ENCODE measurements at regions of chr2 and their contacts with region 1.

Region 1: GRCh38 chr2:165203689-165204559 is at the start of gene SCN3A:
- DNase-seq: no peak
- H3K4me3 ChIP-seq: no peak within 1 kb of the TSS
- CTCF ChIP-seq: peak; percentile 65

Region 2: DNA sequence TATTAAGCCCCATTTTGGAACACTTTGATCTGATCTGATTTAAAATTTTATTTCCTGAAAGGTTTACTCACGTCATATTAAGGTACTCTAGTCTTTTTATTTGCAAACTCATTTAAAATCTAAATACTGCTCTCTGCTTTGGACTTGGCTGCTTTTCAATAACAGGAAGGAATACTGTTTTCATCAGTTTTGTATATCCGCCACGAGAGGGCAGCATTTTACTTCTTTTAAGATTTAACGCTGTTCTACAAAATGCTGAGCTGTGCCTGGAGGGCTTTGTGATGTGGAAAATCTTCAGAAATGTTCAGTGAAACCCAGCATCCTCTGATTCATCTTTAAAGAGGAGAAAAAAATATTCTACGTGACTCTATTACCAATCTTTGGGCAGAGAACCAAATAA is 211.1 kb before region 1 on chr2:
- CTCF ChIA-PET with region 1: interaction called, 77 read pairs
- POLR2A ChIA-PET with region 1: no interaction called
- DNase-seq: peak; percentile 75
- H3K4me3 ChIP-seq: no peak overlapping the region
- CTCF ChIP-seq: peak; percentile 19

Region 3: DNA sequence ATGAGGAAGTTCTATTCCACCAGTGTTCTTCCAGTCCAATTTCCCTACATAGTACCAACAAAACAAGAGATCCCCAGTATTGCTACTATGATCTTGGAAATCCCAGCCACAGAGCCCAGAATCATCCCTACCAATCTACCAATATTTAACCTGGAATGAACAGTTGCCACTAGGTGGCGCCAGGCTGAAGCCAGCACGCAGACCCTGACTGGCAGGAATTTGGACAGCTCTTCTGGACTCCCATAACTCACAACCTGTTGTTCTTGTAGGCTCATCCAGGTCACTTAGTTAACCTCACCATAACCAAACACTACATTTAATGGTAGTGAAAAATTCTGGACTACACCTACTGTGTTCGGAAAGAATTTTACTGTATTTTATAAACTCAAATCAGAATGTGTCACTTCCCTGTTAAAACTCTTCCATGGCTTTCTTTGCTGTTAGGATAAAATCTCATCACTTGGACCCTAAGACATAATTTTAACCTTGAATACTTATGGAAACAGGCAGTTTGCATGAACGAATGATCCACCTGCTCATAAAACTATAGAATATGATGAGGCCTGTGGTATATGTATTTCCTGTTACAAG is 188.8 kb before region 1 on chr2:
- CTCF ChIA-PET with region 1: interaction called, 163 read pairs
- POLR2A ChIA-PET with region 1: no interaction called
- DNase-seq: no peak
- H3K4me3 ChIP-seq: no peak overlapping the region
- CTCF ChIP-seq: peak; percentile 84

Region 4: DNA sequence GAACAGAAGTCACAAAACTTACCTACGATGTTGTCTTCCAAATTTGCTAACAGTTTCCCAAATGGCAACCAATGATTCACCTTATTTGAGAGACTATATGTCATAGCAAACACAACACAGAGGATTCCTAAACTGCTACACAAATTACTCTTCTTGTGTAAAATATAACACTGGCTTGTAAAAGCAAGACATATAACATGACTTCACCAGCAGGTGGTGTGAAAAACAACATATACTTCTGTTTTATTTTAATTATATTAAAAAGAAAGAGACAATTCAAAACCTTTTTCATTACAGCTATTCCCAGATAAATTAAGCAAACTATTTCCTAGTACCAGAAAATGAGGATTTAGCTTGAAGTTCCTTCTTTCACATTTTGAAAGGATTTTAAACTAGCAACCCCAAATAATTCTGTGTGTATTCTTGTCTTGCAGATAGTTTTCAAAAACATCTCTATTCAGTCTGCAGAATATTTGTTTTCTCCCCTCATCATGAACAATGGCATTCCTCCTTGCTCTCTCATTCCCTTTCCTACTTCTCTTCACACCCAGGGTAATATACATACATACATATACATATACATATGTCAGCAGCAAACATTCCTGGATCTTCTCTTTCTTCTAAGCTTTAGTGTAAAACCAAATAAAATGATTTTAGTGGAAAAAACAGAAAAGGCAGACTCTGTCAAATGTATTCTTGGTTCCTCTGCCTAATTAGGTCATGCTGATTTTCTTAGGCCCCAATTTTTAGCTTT is 62.1 kb before region 1 on chr2:
- CTCF ChIA-PET with region 1: interaction called, 12 read pairs
- POLR2A ChIA-PET with region 1: no interaction called
- DNase-seq: no peak
- H3K4me3 ChIP-seq: no peak overlapping the region
- CTCF ChIP-seq: no peak

Region 5: GRCh38 chr2:165219481-165219880 is 15.6 kb after region 1 on chr2:
- CTCF ChIA-PET with region 1: interaction called, 24 read pairs
- POLR2A ChIA-PET with region 1: no interaction called
- DNase-seq: no peak
- H3K4me3 ChIP-seq: no peak overlapping the region
- CTCF ChIP-seq: no peak

Measured in AG04449 (cell line).